PC-3 (cell line): ENCODE measurements at regions of chr3 and their contacts with region 1.

Region 1: GRCh38 chr3:172039436-172040077 is at the start of gene FNDC3B:
- DNase-seq: peak; percentile 95
- ATAC-seq: peak; percentile 73
- H3K4me3 ChIP-seq: peak within 1 kb of the TSS; percentile 95
- H3K27ac ChIP-seq: peak within 1 kb of the TSS; percentile 87
- H3K4me1 ChIP-seq: peaks cover 18% of the 10 kb centered on the region
- H3K27me3 ChIP-seq: no peaks in the 10 kb centered on the region
- CTCF ChIP-seq: no peak
- total RNA-seq, gene FNDC3B: 48.6 and 56.3 TPM in 2 replicates

Region 2: DNA sequence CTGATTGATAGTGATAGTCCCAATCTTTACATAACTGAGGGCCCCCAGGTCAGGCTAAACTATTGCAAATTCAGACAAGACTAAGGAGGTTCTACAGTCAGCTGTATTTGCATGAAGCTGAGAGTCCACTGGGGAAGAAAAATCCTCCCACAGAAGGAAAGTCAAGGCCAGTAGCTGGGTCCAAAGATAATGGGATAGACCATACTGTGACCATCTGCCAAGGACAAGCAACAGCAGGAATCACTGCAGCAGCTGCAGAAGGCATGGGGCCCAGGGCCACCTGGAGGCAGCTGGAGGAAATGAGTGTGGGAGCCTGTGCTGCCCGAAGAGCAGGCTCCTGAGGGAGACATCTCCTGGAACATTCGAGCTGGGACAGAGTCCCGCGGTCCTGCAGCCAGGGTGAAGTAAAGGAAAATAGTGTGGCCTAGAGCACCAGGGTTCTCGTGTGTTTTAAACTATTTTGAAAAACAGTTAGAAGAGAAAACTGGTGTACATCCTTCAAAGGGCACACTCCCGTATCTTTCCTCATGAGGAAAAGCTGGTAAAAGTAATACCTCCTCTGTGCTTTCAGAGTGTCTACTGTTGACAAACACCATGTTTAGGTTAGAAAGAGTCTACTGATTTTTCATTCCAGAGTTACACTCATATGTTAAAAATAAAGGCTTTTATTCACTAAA is 209.6 kb before region 1 on chr3:
- CTCF ChIA-PET with region 1: no interaction called
- POLR2A ChIA-PET with region 1: no interaction called
- intact Hi-C with region 1: loop called (anchors 5 kb)
- DNase-seq: peak; percentile 79
- ATAC-seq: peak; percentile 65
- H3K4me3 ChIP-seq: no peak overlapping the region
- H3K27ac ChIP-seq: peak overlapping the region; percentile 33
- H3K4me1 ChIP-seq: peaks cover 45% of the 10 kb centered on the region
- H3K27me3 ChIP-seq: no peaks in the 10 kb centered on the region
- CTCF ChIP-seq: peak; percentile 89

Region 3: DNA sequence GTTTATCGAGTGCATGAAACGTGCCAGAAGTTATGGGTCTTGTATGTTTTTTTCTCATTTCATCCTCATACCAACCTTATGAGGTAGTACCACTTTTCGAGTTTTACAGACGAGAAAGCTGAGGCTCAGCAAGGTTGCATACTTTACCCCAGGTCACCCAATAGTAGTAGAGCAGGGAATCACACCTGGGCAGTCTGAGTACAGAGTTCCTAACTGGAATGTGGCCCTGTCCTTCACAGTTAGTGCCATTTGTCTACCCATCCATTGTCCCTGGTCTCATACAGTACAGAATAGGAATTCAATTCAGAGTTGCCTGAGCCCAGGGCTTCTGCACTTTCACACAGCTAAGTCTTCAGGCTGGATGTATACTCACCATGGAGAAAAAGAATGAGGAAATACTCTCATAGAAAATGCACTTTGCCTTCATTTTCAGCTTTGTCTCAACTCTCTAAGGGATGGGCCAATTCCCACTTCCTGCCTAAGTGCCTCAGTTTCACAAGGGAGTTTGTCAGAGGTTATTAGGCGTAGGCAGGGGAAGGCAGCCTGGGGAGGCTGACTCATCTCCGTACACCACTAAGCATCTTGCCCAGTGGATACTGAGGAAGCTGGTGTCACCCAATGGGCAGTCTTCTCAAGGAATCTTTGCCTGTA is 103.2 kb before region 1 on chr3:
- CTCF ChIA-PET with region 1: no interaction called
- POLR2A ChIA-PET with region 1: interaction called, 7 read pairs
- intact Hi-C with region 1: loop called (anchors 1 kb)
- DNase-seq: peak; percentile 60
- ATAC-seq: peak; percentile 50
- H3K4me3 ChIP-seq: no peak overlapping the region
- H3K27ac ChIP-seq: peak overlapping the region; percentile 53
- H3K4me1 ChIP-seq: peaks cover 16% of the 10 kb centered on the region
- H3K27me3 ChIP-seq: no peaks in the 10 kb centered on the region
- CTCF ChIP-seq: no peak

Region 4: DNA sequence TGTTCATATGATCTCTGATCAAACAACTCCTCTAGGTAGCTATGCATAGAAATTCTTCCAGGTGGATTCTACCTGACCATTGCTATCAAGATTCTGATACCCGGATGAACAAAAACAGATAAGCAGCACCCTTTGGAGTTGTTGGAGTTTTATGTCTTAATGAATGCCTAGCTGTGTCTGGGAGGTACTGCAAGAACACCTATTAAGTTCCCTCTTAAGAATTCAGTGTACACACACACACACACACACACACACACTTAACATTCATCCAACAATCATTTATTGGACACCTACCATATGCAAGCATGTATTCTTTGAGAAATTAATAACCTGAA is 58.3 kb before region 1 on chr3:
- CTCF ChIA-PET with region 1: no interaction called
- POLR2A ChIA-PET with region 1: interaction called, 22 read pairs
- intact Hi-C with region 1: no loop called
- DNase-seq: no peak
- ATAC-seq: no peak
- H3K4me3 ChIP-seq: no peak overlapping the region
- H3K27ac ChIP-seq: no peak overlapping the region
- H3K4me1 ChIP-seq: peaks cover 9% of the 10 kb centered on the region; the same call in 1 of the 2 replicates
- H3K27me3 ChIP-seq: no peaks in the 10 kb centered on the region
- CTCF ChIP-seq: no peak

Region 5: DNA sequence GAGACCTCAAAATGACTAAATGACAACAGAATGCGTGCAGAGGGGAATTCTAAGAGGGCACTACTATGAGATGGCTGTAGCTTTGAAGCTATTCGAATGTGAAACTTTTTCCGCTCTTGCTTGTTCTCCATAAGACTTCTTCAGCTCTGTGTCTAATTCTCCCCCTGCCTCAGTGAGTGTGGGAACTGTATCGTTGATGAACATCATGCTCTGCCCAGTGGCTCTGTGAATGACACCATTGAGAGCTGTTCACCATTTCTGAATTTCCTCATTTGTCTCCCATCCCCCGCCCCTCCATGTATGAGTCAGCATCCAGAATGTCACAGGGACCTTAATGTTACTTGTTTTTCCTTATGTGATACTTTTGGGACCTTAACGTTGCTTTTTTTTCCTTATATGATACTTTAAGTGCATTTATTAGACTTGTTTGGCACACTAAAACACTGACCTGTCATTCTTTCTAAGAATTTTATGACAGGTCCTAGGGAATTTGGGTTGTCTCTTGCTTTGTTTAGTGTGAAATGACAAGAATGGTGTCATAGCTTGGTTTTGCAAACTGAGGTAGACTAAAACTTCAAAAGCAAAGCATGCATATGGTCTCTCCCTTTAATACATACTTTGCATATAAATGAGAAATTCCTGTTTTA is 99.4 kb after region 1 on chr3:
- CTCF ChIA-PET with region 1: no interaction called
- POLR2A ChIA-PET with region 1: no interaction called
- intact Hi-C with region 1: loop called (anchors 5 kb)
- DNase-seq: peak; percentile 64
- ATAC-seq: no peak
- H3K4me3 ChIP-seq: peak overlapping the region; percentile 13; the same call in 1 of the 2 replicates
- H3K27ac ChIP-seq: peak overlapping the region; percentile 91
- H3K4me1 ChIP-seq: peaks cover 93% of the 10 kb centered on the region
- H3K27me3 ChIP-seq: no peaks in the 10 kb centered on the region
- CTCF ChIP-seq: no peak

Region 6: GRCh38 chr3:172189987-172190603 is 150.5 kb after region 1 on chr3:
- CTCF ChIA-PET with region 1: no interaction called
- POLR2A ChIA-PET with region 1: no interaction called
- intact Hi-C with region 1: no loop called
- DNase-seq: no peak
- ATAC-seq: no peak
- H3K4me3 ChIP-seq: no peak overlapping the region
- H3K27ac ChIP-seq: no peak overlapping the region
- H3K4me1 ChIP-seq: peaks cover 8% of the 10 kb centered on the region
- H3K27me3 ChIP-seq: no peaks in the 10 kb centered on the region
- CTCF ChIP-seq: no peak